ENCODE measurements at regions of chr1 and their contacts with region 1.

Region 1: GRCh38 chr1:247487057-247487456 is 29.2 kb upstream of the OR2B11 start:
- DNase-seq: peak; percentile 26
- H3K4me3 Mint-ChIP-seq: no peak overlapping the region
- H3K27ac Mint-ChIP-seq: no peak overlapping the region
- H3K4me1 Mint-ChIP-seq: no peaks in the 10 kb centered on the region
- H3K27me3 Mint-ChIP-seq: peaks cover 7% of the 10 kb centered on the region

Region 2: GRCh38 chr1:247517795-247518612 is 30.9 kb after region 1 on chr1:
- CTCF ChIA-PET with region 1: interaction called, 3 read pairs
- POLR2A ChIA-PET with region 1: no interaction called
- intact Hi-C with region 1: loop called (anchors 1 kb)
- DNase-seq: peak; percentile 17
- H3K4me3 Mint-ChIP-seq: peak overlapping the region; percentile 39
- H3K27ac Mint-ChIP-seq: no peak overlapping the region
- H3K4me1 Mint-ChIP-seq: no peaks in the 10 kb centered on the region
- H3K27me3 Mint-ChIP-seq: peaks cover 26% of the 10 kb centered on the region

Measured in activated CD4-positive, alpha-beta memory T cell treated with anti-CD3 and anti-CD28 coated beads for 36 hours (primary cell).